GM10248 (cell line): ENCODE measurements at regions of chr6 and their contacts with region 1.

Region 1: GRCh38 chr6:80523531-80523997 is 417.1 kb downstream of the BCKDHB start:
- DNase-seq: no peak
- CTCF ChIP-seq: no peak

Region 2: GRCh38 chr6:80535914-80536565 is 12.5 kb after region 1 on chr6:
- CTCF ChIA-PET with region 1: interaction called, 10 read pairs
- POLR2A ChIA-PET with region 1: no interaction called
- DNase-seq: no peak
- CTCF ChIP-seq: no peak